Lower leg skin (tissue), 4 donors: ENCODE measurements at regions of chr10 and their contacts with region 1.

Region 1: DNA sequence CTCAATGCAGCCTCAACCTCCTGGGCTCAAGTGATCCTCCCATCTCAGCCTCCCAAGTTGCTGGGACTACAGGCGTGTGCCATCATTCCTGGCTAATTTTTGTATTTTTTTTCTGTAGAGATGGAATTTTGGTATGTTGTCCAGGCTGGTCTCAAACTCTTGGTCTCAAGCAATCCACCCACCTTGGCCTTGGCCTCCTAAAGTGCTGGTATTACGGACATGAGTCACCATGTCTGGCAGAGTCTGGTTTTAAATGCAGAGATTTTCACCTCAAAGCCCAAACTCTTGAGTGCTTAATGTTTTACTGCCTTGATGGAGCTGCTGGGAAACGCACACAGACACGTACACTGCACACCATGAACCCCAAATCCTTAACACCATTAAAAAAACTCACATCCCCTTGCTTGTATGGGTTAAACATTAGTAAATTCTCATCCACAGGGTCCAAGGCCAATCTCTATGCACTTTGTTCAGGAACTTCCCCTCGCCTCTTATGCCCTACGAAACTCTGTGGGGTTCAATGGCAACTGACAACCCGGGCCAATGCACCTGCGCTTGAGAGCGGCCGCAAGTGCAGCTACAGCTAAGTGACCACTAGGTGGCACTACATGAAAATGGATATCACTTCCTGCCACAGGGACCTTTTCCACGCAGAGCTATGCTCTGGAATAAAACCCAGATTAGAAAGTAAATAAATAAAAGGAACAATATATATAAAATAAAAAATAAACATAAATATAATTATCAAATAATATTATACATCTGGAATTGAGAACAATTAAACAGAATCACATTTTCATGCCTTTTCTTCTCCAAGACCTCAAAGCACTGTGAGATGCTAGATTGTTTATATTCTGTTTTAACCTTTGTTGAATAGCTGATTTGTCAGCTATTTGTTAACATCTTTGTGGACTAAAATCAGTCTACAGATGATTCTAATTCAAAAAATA is 66.9 kb upstream of the AFAP1L2 start:
- DNase-seq: peak in 1 of 2 donors; percentile 92
- H3K4me3 ChIP-seq: no peak overlapping the region
- CTCF ChIP-seq: peak in 2 of 3 donors; percentile 68 to 77
- POLR2A ChIP-seq: no peak

Region 2: DNA sequence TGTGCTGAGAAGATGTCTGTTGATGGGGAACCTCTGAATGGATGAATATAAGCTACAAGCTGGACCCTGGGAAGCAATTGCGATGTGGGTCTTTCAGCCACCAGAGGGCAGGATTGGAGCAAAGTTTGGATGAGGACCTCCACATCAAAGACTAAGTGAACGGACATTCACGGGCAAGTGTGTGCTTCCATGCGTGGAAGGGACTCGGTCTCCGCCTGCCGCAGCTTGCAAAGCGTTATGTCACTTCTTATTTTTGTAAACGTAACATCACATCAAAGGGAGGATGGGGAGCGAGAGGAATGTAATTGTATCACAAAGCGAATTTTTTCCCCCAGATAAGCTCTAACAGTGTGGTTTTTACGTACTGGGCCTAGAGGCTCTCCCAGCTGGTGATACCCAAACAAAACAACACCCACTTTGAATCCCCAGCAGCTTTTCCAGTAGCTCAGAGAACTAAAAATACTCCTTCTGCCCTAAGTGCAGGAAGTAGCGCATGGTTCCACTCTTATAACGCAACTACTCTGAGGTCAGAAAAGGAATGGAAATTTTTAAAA is 167.1 kb before region 1 on chr10:
- intact Hi-C with region 1: loop called (anchors 10 kb)
- DNase-seq: peak; percentile 85 to 94
- H3K4me3 ChIP-seq: no peak overlapping the region
- CTCF ChIP-seq: peak in 1 of 3 donors; percentile 74
- POLR2A ChIP-seq: no peak

Region 3: GRCh38 chr10:114779803-114780609 is 308.8 kb after region 1 on chr10:
- intact Hi-C with region 1: loop called (anchors 5 kb)
- DNase-seq: no peak
- H3K4me3 ChIP-seq: no peak overlapping the region
- CTCF ChIP-seq: no peak
- POLR2A ChIP-seq: no peak

Region 4: DNA sequence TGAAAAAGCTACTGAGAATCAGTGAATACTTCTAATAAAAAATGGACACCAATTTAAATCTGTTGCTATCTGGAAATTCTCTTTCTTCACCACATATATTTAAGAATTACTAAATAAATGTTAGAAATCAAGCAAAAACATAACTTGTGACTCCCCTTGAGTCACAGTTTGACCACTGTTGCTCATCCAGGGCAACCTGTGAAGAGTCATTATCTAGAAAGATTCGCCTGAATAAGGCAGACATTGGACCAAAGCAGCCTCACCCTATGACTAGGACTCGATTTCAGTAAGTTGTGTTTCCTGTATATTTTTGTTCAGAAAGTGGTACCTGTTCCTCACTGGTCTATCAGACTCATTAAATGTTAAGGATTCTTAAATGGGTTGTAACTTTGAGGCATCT is 1194.3 kb after region 1 on chr10:
- intact Hi-C with region 1: no loop called
- DNase-seq: no peak
- H3K4me3 ChIP-seq: no peak overlapping the region
- CTCF ChIP-seq: no peak
- POLR2A ChIP-seq: no peak